Heart right ventricle (tissue), 16 donors: ENCODE measurements at regions of chr14 and their contacts with region 1.

Region 1: DNA sequence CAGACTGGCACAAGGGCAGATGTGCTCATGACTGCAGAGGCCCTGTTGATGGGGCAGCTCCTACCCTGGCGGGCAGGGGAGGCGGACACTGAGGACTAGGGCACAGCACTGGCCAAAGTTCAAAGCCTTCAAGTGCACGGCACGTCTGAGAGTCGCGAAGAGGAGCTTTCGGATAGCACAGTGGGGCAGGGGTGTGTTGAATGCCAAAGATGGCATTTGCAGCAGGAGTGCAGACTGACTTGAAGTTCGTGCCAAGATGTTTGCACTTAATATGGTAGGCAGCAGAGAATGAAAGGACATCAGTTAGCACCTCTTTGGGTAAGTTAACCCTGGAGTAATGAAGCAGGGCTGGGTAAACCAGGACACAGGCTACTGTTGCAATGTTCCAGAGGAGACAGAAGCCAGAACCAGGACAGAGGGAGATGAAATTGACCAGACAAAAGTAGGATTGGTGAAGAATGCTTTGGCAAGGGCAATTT is 6.7 kb upstream of the EML1 start:
- DNase-seq: peak in 1 of 2 donors; percentile 53
- ATAC-seq: peak; percentile 59 to 90 (median 74)
- H3K4me3 ChIP-seq: no peak overlapping the region
- H3K27ac ChIP-seq: peak overlapping the region in 6 of 10 donors; percentile 11 to 52 (median 43)
- H3K4me1 ChIP-seq: peaks cover 0 to 46% (median 20%) of the 10 kb centered on the region in 9 donors
- H3K27me3 ChIP-seq: peaks cover 0 to 7% (median 0%) of the 10 kb centered on the region in 7 donors
- CTCF ChIP-seq: no peak

Region 2: DNA sequence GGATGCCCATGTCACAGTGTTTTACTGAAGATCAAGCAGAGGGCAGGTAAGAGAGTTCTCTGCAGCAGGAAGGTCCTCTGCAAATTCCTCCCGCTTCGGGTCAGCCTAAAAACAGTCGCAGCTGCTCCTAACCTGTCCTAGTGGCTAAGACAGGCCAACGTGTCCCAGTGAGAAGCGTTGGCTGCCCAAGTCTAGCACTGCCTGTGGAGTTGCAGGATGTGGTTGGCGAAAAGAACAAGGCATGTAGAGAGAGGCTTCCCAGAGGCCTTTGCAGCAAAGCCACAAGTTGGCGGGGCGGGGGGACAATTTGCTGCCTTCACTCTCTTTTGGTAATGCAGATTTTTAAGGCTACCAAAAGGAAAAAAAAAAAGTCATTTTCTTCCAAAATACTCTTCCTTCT is 854.6 kb before region 1 on chr14:
- intact Hi-C with region 1: no loop called
- DNase-seq: no peak
- ATAC-seq: no peak
- H3K4me3 ChIP-seq: no peak overlapping the region
- H3K27ac ChIP-seq: no peak overlapping the region
- H3K4me1 ChIP-seq: no peaks in the 10 kb centered on the region
- H3K27me3 ChIP-seq: peaks cover 0 to 13% (median 0%) of the 10 kb centered on the region in 7 donors
- CTCF ChIP-seq: no peak

Region 3: DNA sequence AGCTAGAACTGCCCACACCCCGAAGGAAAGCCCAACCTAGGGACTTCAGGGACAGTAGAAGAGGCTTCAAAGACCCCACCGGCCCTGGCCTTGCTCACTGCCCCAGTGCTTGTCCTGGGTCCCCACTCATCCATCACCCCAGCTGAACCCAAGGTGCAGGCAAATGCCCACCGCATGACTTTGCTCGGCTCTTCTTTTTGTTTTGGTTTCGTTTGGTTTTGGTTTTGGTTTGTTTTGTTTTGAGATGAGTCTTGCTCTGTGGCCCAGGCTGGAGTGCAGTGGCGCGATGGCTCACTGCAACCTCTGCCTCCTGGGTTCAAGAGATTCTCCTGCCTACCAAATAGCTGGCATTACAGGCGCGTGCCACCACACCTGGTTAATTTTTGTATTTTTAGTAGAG is 191.5 kb before region 1 on chr14:
- intact Hi-C with region 1: no loop called
- DNase-seq: no peak
- ATAC-seq: no peak
- H3K4me3 ChIP-seq: no peak overlapping the region
- H3K27ac ChIP-seq: peak overlapping the region in 4 of 10 donors; percentile 11 to 79 (median 50)
- H3K4me1 ChIP-seq: peaks cover 48 to 99% (median 88%) of the 10 kb centered on the region in 9 donors
- H3K27me3 ChIP-seq: no peaks in the 10 kb centered on the region
- CTCF ChIP-seq: no peak

Region 4: GRCh38 chr14:99636487-99636886 is 150.1 kb before region 1 on chr14:
- intact Hi-C with region 1: no loop called
- DNase-seq: no peak
- ATAC-seq: no peak
- H3K4me3 ChIP-seq: no peak overlapping the region
- H3K27ac ChIP-seq: no peak overlapping the region
- H3K4me1 ChIP-seq: no peaks in the 10 kb centered on the region
- H3K27me3 ChIP-seq: no peaks in the 10 kb centered on the region
- CTCF ChIP-seq: no peak

Region 5: DNA sequence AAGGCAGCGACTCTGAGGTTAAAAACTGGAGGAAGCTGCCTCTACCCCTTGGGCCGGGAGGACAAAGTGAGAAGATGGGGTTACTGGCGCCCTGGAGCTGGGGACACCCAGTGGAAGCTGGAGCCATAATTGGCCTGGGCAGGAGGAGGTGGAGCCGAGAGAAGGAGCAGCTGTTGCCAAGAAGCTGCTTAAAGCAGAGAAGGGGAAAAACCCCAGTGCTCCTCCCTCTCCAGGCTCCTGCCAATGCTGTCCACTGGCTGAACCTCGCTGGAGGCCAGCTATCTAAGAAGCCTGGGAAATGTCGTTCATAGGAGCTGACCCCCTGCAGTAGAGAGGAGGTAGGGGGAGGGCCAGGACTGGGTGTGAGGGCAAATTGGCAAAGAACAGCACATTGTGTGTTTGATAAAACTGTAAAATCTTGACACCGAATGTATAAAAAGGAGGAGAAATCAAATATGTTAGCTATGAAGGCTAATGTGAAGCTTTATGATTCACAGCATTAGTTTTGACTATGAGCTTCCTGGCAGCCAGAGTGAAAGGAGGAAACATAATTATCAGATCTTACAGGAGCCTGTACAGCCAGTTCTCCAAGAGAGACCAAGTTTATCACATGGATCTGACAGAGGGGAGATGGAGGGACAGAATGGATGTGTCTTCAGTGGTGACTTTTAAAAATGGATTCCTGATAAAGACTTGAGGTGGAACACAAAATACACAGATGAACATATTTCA is 132.1 kb before region 1 on chr14:
- intact Hi-C with region 1: no loop called
- DNase-seq: peak in 1 of 2 donors; percentile 43
- ATAC-seq: peak in 7 of 8 donors; percentile 43 to 79 (median 66)
- H3K4me3 ChIP-seq: no peak overlapping the region
- H3K27ac ChIP-seq: no peak overlapping the region
- H3K4me1 ChIP-seq: no peaks in the 10 kb centered on the region
- H3K27me3 ChIP-seq: peaks cover 4 to 23% (median 12%) of the 10 kb centered on the region in 7 donors
- CTCF ChIP-seq: no peak

Region 6: GRCh38 chr14:99744199-99744879 is 42.2 kb before region 1 on chr14:
- intact Hi-C with region 1: loop called in 5 of 10 experiments (anchors 2 to 10 kb)
- DNase-seq: no peak
- ATAC-seq: no peak
- H3K4me3 ChIP-seq: no peak overlapping the region
- H3K27ac ChIP-seq: peak overlapping the region in 2 of 10 donors; percentile 45 to 90
- H3K4me1 ChIP-seq: peaks cover 25 to 85% (median 68%) of the 10 kb centered on the region in 9 donors
- H3K27me3 ChIP-seq: no peaks in the 10 kb centered on the region
- CTCF ChIP-seq: no peak

Region 7: GRCh38 chr14:99755629-99756603 is 30.6 kb before region 1 on chr14:
- intact Hi-C with region 1: loop called in 4 of 10 experiments (anchors 5 kb)
- DNase-seq: peak; percentile 83 to 85
- ATAC-seq: peak; percentile 75 to 90 (median 88)
- H3K4me3 ChIP-seq: no peak overlapping the region
- H3K27ac ChIP-seq: peak overlapping the region in 6 of 10 donors; percentile 14 to 83 (median 36)
- H3K4me1 ChIP-seq: peaks cover 30 to 81% (median 64%) of the 10 kb centered on the region in 9 donors
- H3K27me3 ChIP-seq: peaks cover 0 to 4% (median 0%) of the 10 kb centered on the region in 7 donors
- CTCF ChIP-seq: no peak